ENCODE measurements at regions of chr19 and their contacts with region 1.

Region 1: DNA sequence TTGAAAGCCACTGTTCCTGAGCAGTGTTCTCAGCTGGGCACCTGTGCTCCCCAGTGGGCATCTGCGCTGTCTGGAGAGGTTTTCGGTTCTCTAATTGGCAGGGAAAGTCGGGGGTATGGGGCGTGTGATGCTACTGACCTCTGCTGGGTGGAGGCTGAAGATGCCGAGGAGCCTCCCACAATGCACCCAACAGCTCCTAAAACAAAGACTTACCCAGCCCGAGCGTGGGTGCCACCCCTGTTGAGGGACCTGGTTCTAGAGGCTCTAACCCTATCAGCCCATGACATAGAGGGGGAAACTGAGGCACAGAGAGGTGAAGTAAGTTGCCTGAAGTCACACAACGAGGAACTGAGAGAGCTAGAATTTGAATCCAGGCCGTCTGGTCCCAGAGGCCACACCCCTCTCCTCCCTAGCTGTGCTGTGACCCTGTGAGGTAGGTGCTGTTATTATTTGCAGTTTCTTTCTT is 2.3 kb downstream of the SPACA4 start:
- DNase-seq: peak; percentile 52
- ATAC-seq: peak; percentile 98
- H3K4me3 Mint-ChIP-seq: peak overlapping the region; percentile 52
- H3K27ac Mint-ChIP-seq: peak overlapping the region; percentile 59
- H3K4me1 Mint-ChIP-seq: peaks cover 8% of the 10 kb centered on the region
- H3K27me3 Mint-ChIP-seq: no peaks in the 10 kb centered on the region
- CTCF ChIP-seq: no peak

Region 2: DNA sequence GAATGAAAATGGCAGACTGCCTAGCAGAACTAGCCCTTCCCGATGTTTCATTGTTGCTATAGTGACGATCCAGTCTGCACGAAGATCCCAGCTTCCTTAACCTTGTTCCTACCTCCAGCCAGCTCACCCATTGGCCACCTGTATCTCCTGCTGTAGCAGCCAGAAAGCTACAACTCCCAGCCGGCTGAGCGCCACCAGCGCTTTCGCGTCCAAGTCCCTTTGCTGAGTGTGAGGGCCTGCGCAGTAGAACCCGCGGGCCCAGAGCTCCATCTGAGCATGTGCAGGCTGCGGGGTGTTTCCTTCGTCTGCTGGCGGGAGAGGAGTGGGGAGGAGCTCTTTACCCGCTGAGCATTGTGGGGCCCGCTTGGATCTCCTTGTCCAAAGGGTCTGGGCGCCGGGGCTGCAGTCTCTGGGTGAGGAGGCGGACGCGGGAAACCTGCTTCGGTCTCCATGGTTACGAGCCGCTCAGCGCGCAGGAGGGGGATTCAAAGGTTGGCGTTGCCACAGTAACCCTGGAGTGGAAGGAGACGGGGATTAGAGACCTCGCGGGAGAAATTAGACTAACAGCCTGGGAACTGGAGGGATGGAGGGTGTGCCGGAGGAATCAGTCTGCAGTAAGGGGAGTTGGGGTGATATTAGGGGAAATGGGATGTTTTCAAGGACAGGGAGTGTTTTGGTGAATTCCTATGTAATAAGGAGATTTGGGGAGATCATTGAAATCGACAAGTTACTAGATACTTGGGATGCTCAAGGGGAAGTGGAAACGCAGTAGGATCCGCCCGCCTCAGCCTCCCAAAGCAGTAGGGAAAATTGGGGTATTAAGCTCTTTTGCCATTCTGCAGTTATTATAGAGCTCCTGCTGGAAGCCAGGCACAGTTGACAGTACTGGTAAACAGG is 404.9 kb before region 1 on chr19:
- CTCF ChIA-PET with region 1: no interaction called
- POLR2A ChIA-PET with region 1: no interaction called
- intact Hi-C with region 1: loop called (anchors 5 kb)
- DNase-seq: peak; percentile 79
- ATAC-seq: peak; percentile 100
- H3K4me3 Mint-ChIP-seq: no peak overlapping the region
- H3K27ac Mint-ChIP-seq: no peak overlapping the region
- H3K4me1 Mint-ChIP-seq: peaks cover 6% of the 10 kb centered on the region
- H3K27me3 Mint-ChIP-seq: no peaks in the 10 kb centered on the region
- CTCF ChIP-seq: no peak

Region 3: DNA sequence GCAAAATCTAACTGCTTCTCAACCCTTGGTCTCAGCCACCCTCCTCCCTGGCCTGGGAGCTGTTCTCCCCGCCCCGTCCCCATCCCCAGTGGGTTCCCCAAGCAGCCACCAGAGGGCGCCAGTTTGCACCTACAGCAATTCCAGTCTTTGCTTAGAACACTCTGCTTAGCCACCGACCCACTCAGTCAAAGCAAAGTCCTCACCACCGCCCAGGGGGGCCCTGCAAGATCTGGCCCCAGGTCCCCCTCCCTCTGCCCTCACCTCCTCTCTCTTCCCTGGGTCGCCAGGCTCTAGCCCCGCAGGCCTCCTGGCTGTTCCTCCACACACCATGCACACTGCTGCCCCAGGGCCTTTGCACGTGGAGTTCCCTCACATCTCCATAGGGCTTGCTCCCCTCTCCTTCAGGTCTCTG is 257.5 kb before region 1 on chr19:
- CTCF ChIA-PET with region 1: interaction called, 4 read pairs
- POLR2A ChIA-PET with region 1: interaction called, 3 read pairs
- intact Hi-C with region 1: loop called (anchors 1 kb)
- DNase-seq: peak; percentile 69
- ATAC-seq: peak; percentile 81
- H3K4me3 Mint-ChIP-seq: no peak overlapping the region
- H3K27ac Mint-ChIP-seq: no peak overlapping the region
- H3K4me1 Mint-ChIP-seq: peaks cover 2% of the 10 kb centered on the region
- H3K27me3 Mint-ChIP-seq: no peaks in the 10 kb centered on the region
- CTCF ChIP-seq: no peak

Region 4: DNA sequence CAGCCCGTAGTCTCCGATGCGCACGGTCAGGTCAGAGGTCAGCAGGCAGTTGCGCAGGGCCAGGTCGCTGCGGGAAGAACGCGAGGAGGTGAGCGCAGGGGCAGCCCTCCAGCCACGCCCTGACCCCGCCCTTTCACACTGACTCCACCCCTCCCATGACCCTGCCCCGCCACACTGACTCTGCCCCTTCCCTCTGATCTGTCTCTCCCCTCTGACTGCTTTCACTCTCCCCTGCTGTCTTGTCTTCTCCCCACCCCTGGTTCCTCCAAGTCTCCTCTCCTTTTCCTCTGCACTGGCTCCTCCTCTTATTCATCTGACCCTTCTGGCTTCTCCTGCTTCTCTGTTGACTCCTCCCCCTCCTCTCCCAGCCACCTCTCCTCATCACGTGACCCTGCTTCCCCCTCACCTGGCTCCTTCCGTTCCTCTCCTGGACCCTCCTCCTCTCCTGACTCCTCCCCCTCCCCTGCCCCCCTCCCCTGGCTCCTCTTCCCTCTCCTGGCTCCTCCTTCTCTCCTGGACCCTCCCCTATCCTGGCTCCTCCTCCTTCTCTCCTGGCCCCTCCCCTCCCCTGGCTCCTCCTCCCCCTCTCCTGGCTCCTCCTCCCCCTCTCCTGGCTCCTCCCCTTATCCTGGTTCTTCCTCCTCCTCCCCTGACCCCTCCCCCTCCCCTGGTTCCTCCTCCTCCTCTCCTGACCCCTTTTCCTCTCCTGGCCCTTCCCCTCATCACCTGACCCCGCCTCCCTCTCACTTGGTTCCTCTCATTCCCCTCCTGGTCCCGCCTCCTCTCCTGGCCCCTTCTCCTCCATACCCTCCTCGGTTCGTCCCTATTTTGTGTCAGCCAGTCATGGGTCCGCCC is 107.1 kb before region 1 on chr19:
- CTCF ChIA-PET with region 1: interaction called, 11 read pairs
- POLR2A ChIA-PET with region 1: interaction called, 3 read pairs
- intact Hi-C with region 1: loop called (anchors 1 kb)
- DNase-seq: no peak
- ATAC-seq: peak; percentile 64
- H3K4me3 Mint-ChIP-seq: peak overlapping the region; percentile 65
- H3K27ac Mint-ChIP-seq: no peak overlapping the region
- H3K4me1 Mint-ChIP-seq: peaks cover 24% of the 10 kb centered on the region
- H3K27me3 Mint-ChIP-seq: peaks cover 15% of the 10 kb centered on the region
- CTCF ChIP-seq: no peak

Region 5: GRCh38 chr19:48618916-48619691 is 10.3 kb after region 1 on chr19 and contains the starts of genes RPL18 and SPHK2:
- CTCF ChIA-PET with region 1: interaction called, 13 read pairs
- POLR2A ChIA-PET with region 1: interaction called, 56 read pairs
- intact Hi-C with region 1: loop called (anchors 1 kb)
- DNase-seq: peak; percentile 93
- ATAC-seq: peak; percentile 81
- H3K4me3 Mint-ChIP-seq: peak within 1 kb of the TSS; percentile 98
- H3K27ac Mint-ChIP-seq: peak within 1 kb of the TSS; percentile 97
- H3K4me1 Mint-ChIP-seq: peaks cover 56% of the 10 kb centered on the region
- H3K27me3 Mint-ChIP-seq: no peaks in the 10 kb centered on the region
- CTCF ChIP-seq: no peak
- total RNA-seq, gene RPL18: 2,427 and 2,762 TPM in 2 replicates
- total RNA-seq, gene SPHK2: 38.2 and 48.5 TPM in 2 replicates

Region 6: GRCh38 chr19:49073514-49074378 is 464.9 kb after region 1 on chr19:
- CTCF ChIA-PET with region 1: no interaction called
- POLR2A ChIA-PET with region 1: no interaction called
- intact Hi-C with region 1: no loop called
- DNase-seq: no peak
- ATAC-seq: no peak
- H3K4me3 Mint-ChIP-seq: peak overlapping the region; percentile 2
- H3K27ac Mint-ChIP-seq: no peak overlapping the region
- H3K4me1 Mint-ChIP-seq: peaks cover 19% of the 10 kb centered on the region
- H3K27me3 Mint-ChIP-seq: peaks cover 50% of the 10 kb centered on the region
- CTCF ChIP-seq: no peak

Region 7: DNA sequence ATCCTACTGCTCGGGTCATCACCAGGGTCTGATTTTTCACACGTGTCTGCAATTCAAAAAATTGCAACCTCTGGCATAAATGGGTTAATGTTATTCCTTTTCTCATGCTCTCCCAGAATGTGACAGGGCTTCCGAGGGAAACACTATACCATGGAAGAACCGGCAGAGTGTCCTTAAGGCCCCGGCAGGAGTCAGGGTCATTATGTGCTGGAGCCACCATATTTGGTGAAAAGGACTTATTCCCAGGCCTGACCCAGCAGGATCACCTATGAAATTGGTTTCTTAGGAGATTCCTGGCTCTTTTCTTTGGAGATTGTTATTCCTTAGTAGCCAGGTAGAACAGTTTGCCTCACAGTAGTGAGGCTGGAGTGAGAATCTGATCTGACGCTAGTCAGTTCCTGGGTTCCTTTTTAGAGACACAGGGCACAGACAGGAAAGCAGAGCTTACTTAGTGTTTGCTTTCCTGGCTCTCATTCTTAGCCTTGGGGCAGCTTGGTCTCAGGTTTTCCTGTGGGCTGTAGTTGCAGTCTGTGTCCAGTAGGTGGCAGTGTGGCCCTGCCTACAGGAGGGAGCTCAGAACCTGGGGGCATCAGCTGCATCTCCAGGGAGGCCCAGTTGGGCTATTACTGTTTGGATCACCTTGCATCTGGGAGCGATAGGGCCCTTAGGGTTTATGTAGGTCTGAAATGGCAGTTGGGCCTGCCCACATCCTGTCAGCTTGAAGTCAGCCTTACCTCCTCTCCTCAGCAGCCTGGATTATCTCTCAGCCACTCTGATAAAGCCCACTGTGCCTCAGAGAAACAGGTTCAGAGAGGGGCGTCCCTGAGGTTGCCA is 488.8 kb after region 1 on chr19:
- CTCF ChIA-PET with region 1: no interaction called
- POLR2A ChIA-PET with region 1: interaction called, 11 read pairs
- intact Hi-C with region 1: no loop called
- DNase-seq: peak; percentile 61
- ATAC-seq: peak; percentile 96
- H3K4me3 Mint-ChIP-seq: no peak overlapping the region
- H3K27ac Mint-ChIP-seq: no peak overlapping the region
- H3K4me1 Mint-ChIP-seq: peaks cover 7% of the 10 kb centered on the region
- H3K27me3 Mint-ChIP-seq: no peaks in the 10 kb centered on the region
- CTCF ChIP-seq: peak; percentile 71